Vagina (tissue), 2 donors: ENCODE measurements at regions of chr2 and their contacts with region 1.

Region 1: DNA sequence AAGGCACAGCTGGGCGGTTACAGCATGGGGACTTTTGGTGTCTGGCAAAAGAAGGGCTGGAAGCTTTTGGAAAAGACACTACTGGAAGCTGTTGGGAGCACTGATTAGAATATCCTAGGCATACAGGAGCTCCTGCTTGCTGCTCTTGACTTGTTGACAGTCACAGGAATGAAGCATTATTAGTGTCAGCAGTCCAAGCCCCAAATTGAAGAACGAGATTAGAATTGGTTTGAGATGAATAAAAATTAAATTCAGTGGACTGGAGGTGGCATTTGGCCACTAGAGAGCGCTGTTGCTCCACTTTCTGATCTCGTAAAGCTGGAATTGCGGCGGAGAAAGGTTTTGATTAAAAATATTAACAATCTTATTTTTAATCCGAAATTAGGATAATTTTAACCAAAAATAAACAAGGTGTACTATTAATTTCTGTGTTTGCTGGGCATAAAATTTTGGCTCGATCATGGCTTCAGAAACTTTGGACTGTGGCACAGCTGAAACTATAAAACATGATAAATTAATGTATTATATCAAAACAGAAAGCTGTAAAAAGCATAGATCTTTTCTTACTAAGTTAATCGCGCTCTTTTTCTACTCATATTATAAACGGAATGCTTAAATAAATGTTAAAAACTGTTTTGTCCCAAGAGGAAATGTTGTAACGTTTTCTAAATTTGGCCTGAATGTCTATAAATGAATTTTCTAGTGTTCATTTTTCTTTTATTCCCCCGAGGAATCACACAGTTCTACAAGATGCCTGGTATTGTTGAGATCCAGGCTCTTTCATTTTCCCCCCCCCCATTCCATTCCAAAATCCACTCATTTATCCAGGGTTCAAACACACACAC is 2.4 kb upstream of the HOXD8 start:
- DNase-seq: no peak
- H3K4me3 ChIP-seq: no peak overlapping the region
- H3K27ac ChIP-seq: peak overlapping the region; percentile 83
- H3K4me1 ChIP-seq: peaks cover 13% of the 10 kb centered on the region
- H3K27me3 ChIP-seq: peaks cover 5% of the 10 kb centered on the region
- CTCF ChIP-seq: peak; percentile 55 to 85 (median 64)
- POLR2A ChIP-seq: no peak

Region 2: GRCh38 chr2:176106581-176107539 is 20.3 kb before region 1 on chr2 and contains the start of gene HOXD11:
- intact Hi-C with region 1: loop called (anchors 1 kb)
- DNase-seq: no peak
- H3K4me3 ChIP-seq: peak within 1 kb of the TSS; percentile 54 to 59
- H3K27ac ChIP-seq: peak within 1 kb of the TSS; percentile 82
- H3K4me1 ChIP-seq: peaks cover 71% of the 10 kb centered on the region
- H3K27me3 ChIP-seq: no peaks in the 10 kb centered on the region
- CTCF ChIP-seq: no peak
- POLR2A ChIP-seq: no peak
- total RNA-seq, gene HOXD11: 19.4 TPM

Region 3: GRCh38 chr2:176174382-176174823 is 47.3 kb after region 1 on chr2:
- intact Hi-C with region 1: no loop called
- DNase-seq: no peak
- H3K4me3 ChIP-seq: no peak overlapping the region
- H3K27ac ChIP-seq: no peak overlapping the region
- H3K4me1 ChIP-seq: peaks cover 13% of the 10 kb centered on the region
- H3K27me3 ChIP-seq: peaks cover 5% of the 10 kb centered on the region
- CTCF ChIP-seq: no peak
- POLR2A ChIP-seq: no peak

Region 4: GRCh38 chr2:176638167-176639015 is 511.2 kb after region 1 on chr2:
- intact Hi-C with region 1: loop called (anchors 5 kb)
- DNase-seq: no peak
- H3K4me3 ChIP-seq: peak overlapping the region; percentile 58 to 84
- H3K27ac ChIP-seq: no peak overlapping the region
- H3K4me1 ChIP-seq: peaks cover 9% of the 10 kb centered on the region
- H3K27me3 ChIP-seq: no peaks in the 10 kb centered on the region
- CTCF ChIP-seq: peak; percentile 65 to 77 (median 67)
- POLR2A ChIP-seq: no peak

Region 5: DNA sequence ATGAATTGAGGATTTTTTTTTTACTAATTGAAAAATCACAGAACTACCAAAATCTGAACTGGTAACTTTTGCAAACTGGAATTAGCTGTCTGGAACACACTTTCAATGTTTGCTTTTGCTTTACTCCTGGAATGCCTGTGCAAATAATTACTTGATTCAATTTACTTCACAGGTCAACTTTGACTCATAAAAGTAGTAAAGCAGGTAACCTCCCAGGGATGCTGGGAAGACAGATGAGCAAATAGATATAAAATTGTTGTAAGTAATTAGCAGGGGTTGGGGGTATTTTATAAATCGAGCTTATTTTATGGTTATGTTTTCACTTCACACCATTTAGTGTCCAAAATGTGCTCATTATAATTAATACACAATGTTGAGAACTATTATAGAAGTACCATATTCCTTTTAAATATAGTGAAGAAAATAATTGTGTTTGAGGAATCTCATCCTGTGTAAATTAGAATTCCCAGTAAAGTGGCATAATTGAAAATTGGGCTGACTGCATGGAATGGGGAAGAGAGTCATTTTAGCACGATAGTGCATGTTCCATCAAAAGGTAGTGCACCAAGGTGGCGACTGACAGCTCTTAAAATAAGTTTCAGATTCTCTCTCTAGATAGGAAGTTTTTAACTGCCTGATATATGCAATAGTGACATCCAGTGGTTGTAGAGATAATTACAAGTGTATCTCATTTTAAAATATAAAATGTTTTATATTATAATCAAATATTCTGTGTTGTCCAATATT is 687.3 kb after region 1 on chr2:
- intact Hi-C with region 1: loop called (anchors 5 kb)
- DNase-seq: no peak
- H3K4me3 ChIP-seq: no peak overlapping the region
- H3K27ac ChIP-seq: no peak overlapping the region
- H3K4me1 ChIP-seq: peaks cover 5% of the 10 kb centered on the region
- H3K27me3 ChIP-seq: no peaks in the 10 kb centered on the region
- CTCF ChIP-seq: peak; percentile 17 to 55 (median 41)
- POLR2A ChIP-seq: no peak

Region 6: DNA sequence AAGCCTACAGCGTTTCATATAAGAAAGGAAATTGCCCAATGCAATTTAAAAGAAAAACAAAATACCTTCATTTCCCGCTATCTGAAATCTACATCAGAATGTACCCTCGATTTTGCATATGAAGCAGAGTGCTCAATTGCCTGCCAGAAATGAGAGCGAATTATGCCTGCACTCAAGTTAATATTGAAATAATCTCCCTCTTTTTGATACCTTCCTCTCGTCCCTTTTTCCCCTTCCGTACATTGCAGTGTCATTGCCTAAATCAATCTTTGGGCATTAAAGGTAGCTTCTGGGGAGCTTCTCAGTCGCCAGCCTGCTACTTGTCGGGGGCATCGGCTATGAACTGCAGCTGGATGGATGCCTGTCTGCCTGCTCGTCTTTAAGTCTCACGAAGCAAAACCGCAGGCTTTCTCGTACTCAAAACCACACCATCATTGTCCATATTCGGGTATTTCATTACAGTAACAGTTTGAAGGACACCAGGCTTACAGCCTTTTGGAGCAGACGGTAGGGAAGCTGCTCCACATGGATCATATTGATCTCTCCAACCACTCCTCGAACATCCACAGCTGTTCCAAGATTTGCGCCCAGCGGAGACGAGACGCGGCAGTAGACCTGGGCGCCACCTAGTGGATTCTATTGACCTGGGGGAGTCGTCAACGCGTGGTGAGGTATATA is 1021.5 kb after region 1 on chr2:
- intact Hi-C with region 1: loop called (anchors 10 kb)
- DNase-seq: no peak
- H3K4me3 ChIP-seq: peak overlapping the region; percentile 39 to 46
- H3K27ac ChIP-seq: peak overlapping the region; percentile 34
- H3K4me1 ChIP-seq: peaks cover 6% of the 10 kb centered on the region
- H3K27me3 ChIP-seq: no peaks in the 10 kb centered on the region
- CTCF ChIP-seq: peak; percentile 48 to 72 (median 57)
- POLR2A ChIP-seq: no peak